ENCODE measurements at regions of chr19 and their contacts with region 1.

Region 1: GRCh38 chr19:38838573-38839269 is 7.1 kb upstream of the ECH1 start:
- DNase-seq: peak; percentile 92
- H3K4me3 Mint-ChIP-seq: peak overlapping the region; percentile 51
- H3K27ac Mint-ChIP-seq: peak overlapping the region; percentile 85
- H3K4me1 Mint-ChIP-seq: peaks cover 21% of the 10 kb centered on the region
- H3K27me3 Mint-ChIP-seq: no peaks in the 10 kb centered on the region
- CTCF ChIP-seq: peak; percentile 37

Region 2: GRCh38 chr19:38304866-38305429 is 533.8 kb before region 1 on chr19:
- CTCF ChIA-PET with region 1: no interaction called
- POLR2A ChIA-PET with region 1: no interaction called
- intact Hi-C with region 1: no loop called
- DNase-seq: peak; percentile 99
- H3K4me3 Mint-ChIP-seq: peak overlapping the region; percentile 89
- H3K27ac Mint-ChIP-seq: peak overlapping the region; percentile 91
- H3K4me1 Mint-ChIP-seq: peaks cover 17% of the 10 kb centered on the region
- H3K27me3 Mint-ChIP-seq: no peaks in the 10 kb centered on the region
- CTCF ChIP-seq: no peak

Region 3: DNA sequence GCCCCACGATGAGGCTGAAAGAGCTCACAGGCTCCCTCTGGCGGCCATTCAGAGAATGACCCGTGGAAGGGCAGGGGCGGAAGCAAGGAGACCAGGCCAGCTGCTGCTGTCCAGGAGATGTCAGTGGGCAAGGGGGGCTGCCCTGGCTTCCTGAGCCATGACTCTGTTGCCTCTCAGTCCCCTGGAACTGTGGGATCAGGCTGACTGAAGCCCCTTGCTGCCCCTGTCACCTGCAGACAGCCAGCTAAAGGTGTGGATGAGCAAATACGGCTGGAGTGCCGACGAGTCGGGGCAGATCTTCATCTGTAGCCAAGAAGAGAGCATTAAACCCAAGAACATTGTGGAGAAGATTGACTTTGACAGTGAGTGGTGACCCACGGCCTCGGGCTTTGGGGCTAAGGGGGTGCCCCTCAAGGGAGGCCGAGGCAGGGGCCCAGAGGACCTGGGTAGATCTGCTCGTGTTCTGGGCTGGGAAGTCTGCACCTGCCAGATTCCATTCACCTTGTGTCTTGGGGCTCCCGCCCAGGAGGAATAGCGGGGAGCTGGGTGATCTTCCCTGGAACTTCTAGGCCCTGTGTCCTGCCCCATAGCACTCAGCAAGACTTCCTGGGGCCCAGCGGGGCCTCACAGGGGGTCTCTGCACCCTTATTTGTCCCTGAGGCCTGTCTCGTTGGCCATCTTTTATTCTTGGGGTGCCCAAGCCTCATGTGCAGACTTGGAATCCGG is 203.8 kb before region 1 on chr19:
- CTCF ChIA-PET with region 1: interaction called, 6 read pairs
- POLR2A ChIA-PET with region 1: interaction called, 9 read pairs
- intact Hi-C with region 1: loop called (anchors 2 kb)
- DNase-seq: peak; percentile 80
- H3K4me3 Mint-ChIP-seq: no peak overlapping the region
- H3K27ac Mint-ChIP-seq: peak overlapping the region; percentile 24
- H3K4me1 Mint-ChIP-seq: peaks cover 17% of the 10 kb centered on the region
- H3K27me3 Mint-ChIP-seq: no peaks in the 10 kb centered on the region
- CTCF ChIP-seq: peak; percentile 91

Region 4: DNA sequence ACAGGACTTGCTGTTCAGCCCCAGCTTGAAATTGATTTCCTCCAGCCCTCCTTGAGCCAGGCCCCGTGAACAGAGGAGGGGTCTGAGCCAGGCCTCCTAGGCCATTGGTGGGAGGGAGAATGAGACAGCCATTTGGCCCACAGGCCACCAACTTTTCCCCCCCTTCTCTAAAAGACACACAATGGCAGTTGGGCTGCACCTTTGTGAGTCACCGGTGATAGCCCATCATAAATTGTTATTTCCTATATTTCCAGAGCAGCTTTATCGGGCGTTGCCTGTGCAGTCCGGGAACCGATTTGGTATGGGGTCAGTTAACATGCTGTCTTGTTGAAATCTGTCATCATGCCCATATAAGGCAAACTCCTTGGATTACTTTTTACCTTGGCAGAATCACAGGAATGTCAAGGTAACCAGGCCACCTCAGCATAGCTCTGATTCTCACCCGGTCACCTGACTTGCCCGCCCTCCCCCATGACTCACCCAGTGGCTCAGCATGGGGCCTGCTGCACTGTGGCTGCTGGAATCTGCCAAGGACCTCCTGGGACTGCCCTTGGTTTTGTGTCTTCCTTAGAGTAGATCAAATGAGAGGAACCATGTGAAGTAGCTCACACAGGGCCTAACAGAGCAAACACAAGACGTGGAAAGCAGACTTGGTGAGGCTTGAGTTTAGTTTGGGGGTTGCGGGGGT is 155.2 kb before region 1 on chr19:
- CTCF ChIA-PET with region 1: no interaction called
- POLR2A ChIA-PET with region 1: interaction called, 15 read pairs
- intact Hi-C with region 1: no loop called
- DNase-seq: peak; percentile 99
- H3K4me3 Mint-ChIP-seq: peak overlapping the region; percentile 48
- H3K27ac Mint-ChIP-seq: peak overlapping the region; percentile 98
- H3K4me1 Mint-ChIP-seq: peaks cover 68% of the 10 kb centered on the region
- H3K27me3 Mint-ChIP-seq: no peaks in the 10 kb centered on the region
- CTCF ChIP-seq: no peak

Region 5: GRCh38 chr19:38743394-38744295 is 95.1 kb before region 1 on chr19:
- CTCF ChIA-PET with region 1: no interaction called
- POLR2A ChIA-PET with region 1: no interaction called
- intact Hi-C with region 1: no loop called
- DNase-seq: no peak
- H3K4me3 Mint-ChIP-seq: no peak overlapping the region
- H3K27ac Mint-ChIP-seq: no peak overlapping the region
- H3K4me1 Mint-ChIP-seq: no peaks in the 10 kb centered on the region
- H3K27me3 Mint-ChIP-seq: no peaks in the 10 kb centered on the region
- CTCF ChIP-seq: no peak

Region 6: DNA sequence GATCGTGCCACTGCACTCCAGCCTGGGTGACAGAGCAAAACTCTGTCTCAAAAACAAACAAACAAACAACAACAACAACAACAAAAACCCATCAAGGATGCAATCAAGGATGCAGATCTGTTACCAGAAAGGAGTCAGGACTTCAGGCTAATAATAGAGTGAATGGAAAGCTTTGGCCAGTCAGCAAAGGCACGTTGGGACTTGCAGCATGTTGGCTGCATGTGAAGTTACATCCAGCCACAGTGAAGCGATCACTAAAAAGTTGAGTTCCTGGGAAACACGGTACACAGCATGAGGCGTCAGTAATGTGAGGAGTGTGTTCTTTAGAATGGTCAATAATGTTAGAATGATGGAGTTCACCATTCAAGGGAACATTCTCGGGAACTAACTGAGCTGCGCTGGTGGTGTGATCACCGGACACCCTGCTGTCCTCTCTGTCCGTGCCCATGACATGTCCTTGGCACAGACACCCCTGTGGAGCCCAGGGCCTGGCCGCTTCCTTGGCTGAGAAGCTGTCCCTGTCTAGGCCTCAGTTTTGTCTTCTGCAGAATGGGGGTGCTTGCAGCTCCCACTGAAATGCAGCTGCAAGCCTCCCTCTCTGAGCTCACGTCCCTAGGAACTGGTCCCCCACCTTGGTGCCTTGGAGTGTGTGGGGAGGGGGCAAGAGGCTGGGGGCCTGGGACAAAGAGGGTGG is 52.0 kb before region 1 on chr19:
- CTCF ChIA-PET with region 1: no interaction called
- POLR2A ChIA-PET with region 1: interaction called, 14 read pairs
- intact Hi-C with region 1: no loop called
- DNase-seq: peak; percentile 69
- H3K4me3 Mint-ChIP-seq: no peak overlapping the region
- H3K27ac Mint-ChIP-seq: peak overlapping the region; percentile 12
- H3K4me1 Mint-ChIP-seq: peaks cover 14% of the 10 kb centered on the region
- H3K27me3 Mint-ChIP-seq: no peaks in the 10 kb centered on the region
- CTCF ChIP-seq: no peak

Region 7: GRCh38 chr19:38899447-38900219 is 60.9 kb after region 1 on chr19 and contains the starts of genes NFKBIB and SIRT2:
- CTCF ChIA-PET with region 1: interaction called, 3 read pairs
- POLR2A ChIA-PET with region 1: interaction called, 10 read pairs
- intact Hi-C with region 1: no loop called
- DNase-seq: peak; percentile 100
- H3K4me3 Mint-ChIP-seq: peak within 1 kb of the TSS; percentile 88
- H3K27ac Mint-ChIP-seq: peak within 1 kb of the TSS; percentile 98
- H3K4me1 Mint-ChIP-seq: peaks cover 27% of the 10 kb centered on the region
- H3K27me3 Mint-ChIP-seq: no peaks in the 10 kb centered on the region
- CTCF ChIP-seq: no peak
- total RNA-seq, gene NFKBIB: 45.1 and 45.4 TPM in 2 replicates
- total RNA-seq, gene SIRT2: 35.5 and 37.4 TPM in 2 replicates

Measured in MCF 10A (cell line).